GM12878 (cell line): ENCODE measurements at regions of chr18 and their contacts with region 1.

Region 1: GRCh38 chr18:4734903-4735302 is 279.8 kb upstream of the DLGAP1 start:
- DNase-seq: no peak
- ATAC-seq: peak; percentile 43; the same call in 2 of the 3 replicates
- H3K4me3 ChIP-seq: no peak overlapping the region
- H3K27ac ChIP-seq: no peak overlapping the region
- H3K4me1 ChIP-seq: no peaks in the 10 kb centered on the region
- H3K27me3 ChIP-seq: no peaks in the 10 kb centered on the region
- CTCF ChIP-seq: no peak
- EP300 ChIP-seq: no peak
- POLR2A ChIP-seq: no peak
- RAD21 ChIP-seq: no peak

Region 2: GRCh38 chr18:4720518-4720917 is 14.4 kb before region 1 on chr18:
- CTCF ChIA-PET with region 1: interaction called, 3 read pairs
- POLR2A ChIA-PET with region 1: no interaction called
- RAD21 ChIA-PET with region 1: interaction called, 3 read pairs
- SMC1A ChIA-PET with region 1: interaction called, 42 read pairs
- in situ Hi-C with region 1: no loop called
- intact Hi-C with region 1: no loop called
- DNase-seq: no peak
- ATAC-seq: no peak
- H3K4me3 ChIP-seq: no peak overlapping the region
- H3K27ac ChIP-seq: no peak overlapping the region
- H3K4me1 ChIP-seq: no peaks in the 10 kb centered on the region
- H3K27me3 ChIP-seq: no peaks in the 10 kb centered on the region
- CTCF ChIP-seq: no peak
- EP300 ChIP-seq: no peak
- POLR2A ChIP-seq: no peak
- RAD21 ChIP-seq: no peak